Astrocyte of the cerebellum (primary cell): ENCODE measurements at regions of chr7 and their contacts with region 1.

Region 1: GRCh38 chr7:140242057-140243031 is 65.6 kb upstream of the KDM7A start:
- DNase-seq: no peak
- H3K4me3 ChIP-seq: no peak overlapping the region
- CTCF ChIP-seq: no peak

Region 2: DNA sequence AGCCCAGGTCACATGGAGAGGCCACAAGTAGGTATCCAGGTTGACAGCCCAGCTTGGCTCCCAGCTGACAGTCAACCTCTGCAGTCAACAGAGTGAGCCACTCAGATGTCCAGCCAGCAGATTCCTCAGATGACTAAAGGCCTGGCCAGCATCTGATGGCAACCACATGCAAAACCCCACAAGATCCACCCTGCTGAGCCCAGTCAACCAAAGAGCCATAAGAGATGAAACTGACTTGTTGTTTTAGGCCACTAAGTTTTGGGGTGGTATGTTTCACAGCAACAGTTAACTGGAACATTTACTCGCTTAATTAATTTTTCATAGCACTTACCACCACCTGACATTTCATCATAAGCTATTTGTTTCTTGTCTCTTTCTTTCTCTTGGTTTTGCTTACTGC is 41.7 kb after region 1 on chr7:
- in situ Hi-C with region 1: loop called (anchors 5 kb)
- DNase-seq: peak; percentile 91
- H3K4me3 ChIP-seq: no peak overlapping the region
- CTCF ChIP-seq: no peak

Region 3: DNA sequence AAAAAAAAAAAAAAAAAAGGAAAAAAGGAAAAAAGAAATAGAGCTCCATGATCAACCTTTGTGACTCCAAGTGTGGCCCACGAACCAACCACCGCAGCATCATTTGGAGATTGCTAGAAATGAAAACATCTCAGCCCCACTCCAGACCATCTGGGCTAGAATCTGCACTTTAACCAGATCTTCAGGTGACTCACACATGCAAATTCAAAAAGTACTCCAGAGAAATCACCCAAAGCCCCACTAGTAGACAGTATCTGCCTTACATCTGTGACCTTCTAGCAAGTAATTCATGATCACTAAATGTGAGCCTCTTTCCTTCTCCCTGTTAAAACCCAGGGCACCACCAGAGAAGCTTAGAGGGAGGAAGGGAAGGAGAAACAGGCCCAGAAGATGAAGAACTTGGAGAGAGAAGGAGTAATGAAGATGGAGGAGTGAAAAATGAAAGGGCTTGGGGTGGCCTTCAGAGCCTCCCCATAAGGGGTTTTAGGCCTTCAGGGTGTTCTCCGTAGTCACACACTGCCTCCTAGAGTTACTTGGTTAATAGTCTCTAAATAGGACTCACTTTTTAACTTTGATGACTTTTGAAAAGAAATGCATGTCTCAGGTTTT is 62.0 kb after region 1 on chr7:
- in situ Hi-C with region 1: no loop called
- DNase-seq: peak; percentile 13
- H3K4me3 ChIP-seq: no peak overlapping the region
- CTCF ChIP-seq: peak; percentile 26